Activated CD4-positive, alpha-beta memory T cell treated with anti-CD3 and anti-CD28 coated beads for 36 hours (primary cell): ENCODE measurements at regions of chr6 and their contacts with region 1.

Region 1: DNA sequence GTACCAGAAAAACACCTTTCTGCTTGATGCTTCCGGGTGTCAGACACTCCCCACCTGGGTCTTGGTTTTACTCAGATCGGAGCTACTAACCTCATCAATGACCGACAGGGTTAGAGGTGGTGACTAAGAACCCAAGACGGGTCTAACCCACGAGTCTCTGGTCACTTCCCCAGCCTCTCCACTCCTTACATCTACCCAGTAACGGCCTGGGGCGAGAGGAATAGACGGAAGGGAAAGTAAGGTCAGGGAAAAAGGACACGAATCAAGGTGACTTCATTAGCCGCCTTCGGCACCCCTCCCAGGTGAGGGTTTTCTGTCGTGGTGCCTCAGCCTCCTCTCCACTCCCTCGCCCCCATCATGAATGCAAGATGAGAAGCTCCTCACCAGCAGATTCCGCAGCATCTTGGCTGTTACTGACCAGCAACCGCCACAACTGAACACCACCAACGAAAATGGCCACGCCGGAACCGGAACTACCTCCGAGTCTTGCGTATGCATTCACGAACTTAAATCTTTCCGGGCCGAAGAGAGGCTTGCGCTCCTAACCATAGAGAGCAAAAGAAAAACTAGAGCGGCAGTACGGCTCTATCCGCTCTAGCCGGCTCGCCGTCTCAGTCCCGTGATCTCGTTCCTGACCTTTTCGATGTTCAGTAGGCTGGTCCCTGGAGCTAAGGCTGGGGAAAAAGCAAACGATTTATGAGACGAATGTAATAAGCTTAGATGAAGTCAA is at the start of gene COX7A2:
- DNase-seq: peak; percentile 92
- H3K4me3 Mint-ChIP-seq: peak within 1 kb of the TSS; percentile 100
- H3K27ac Mint-ChIP-seq: peak within 1 kb of the TSS; percentile 100
- H3K4me1 Mint-ChIP-seq: peaks cover 26% of the 10 kb centered on the region
- H3K27me3 Mint-ChIP-seq: peaks cover 9% of the 10 kb centered on the region
- total RNA-seq, gene COX7A2: 564 to 566 TPM

Region 2: DNA sequence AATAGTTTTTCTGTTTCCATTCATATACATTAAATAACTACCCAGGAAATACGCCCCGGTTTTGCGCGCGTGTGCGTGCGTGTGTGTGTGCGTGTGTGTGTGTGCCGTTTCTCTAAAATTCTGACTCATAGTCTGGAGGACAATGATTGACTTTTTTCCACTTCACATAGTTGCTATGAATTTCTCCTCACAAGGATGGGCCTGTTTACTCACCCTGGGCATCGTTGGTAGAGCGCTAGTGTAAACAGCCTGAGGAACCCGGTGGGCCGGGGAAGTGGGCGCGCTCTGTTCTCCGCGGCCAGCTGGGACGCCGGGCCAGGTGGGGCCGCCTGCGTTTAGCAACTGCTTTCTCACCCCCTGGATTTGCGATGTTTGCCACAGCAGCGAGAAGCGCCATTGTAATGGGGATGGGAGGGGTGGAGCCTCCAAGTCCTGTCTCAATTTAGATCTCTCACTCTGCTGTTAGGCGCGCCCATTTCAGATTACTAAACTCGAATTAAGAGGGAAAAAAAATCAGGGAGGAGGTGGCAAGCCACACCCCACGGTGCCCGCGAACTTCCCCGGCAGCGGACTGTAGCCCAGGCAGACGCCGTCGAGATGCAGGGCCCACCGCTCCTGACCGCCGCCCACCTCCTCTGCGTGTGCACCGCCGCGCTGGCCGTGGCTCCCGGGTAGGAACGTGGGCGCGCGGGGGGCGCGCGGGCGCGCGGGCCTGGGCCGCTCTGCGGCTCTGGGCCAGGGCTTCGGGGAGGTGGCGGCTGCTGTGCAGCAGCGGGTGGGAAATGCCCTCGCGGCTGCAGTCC is 1547.7 kb before region 1 on chr6 and contains the start of gene CD109:
- CTCF ChIA-PET with region 1: no interaction called
- POLR2A ChIA-PET with region 1: no interaction called
- intact Hi-C with region 1: loop called (anchors 1 kb)
- DNase-seq: peak; percentile 87
- H3K4me3 Mint-ChIP-seq: peak within 1 kb of the TSS; percentile 80
- H3K27ac Mint-ChIP-seq: peak within 1 kb of the TSS; percentile 90
- H3K4me1 Mint-ChIP-seq: peaks cover 36% of the 10 kb centered on the region
- H3K27me3 Mint-ChIP-seq: peaks cover 16% of the 10 kb centered on the region
- total RNA-seq, gene CD109: 7.2 to 9.1 TPM

Region 3: GRCh38 chr6:75266716-75267291 is 23.3 kb after region 1 on chr6:
- CTCF ChIA-PET with region 1: interaction called, 12 read pairs
- POLR2A ChIA-PET with region 1: no interaction called
- intact Hi-C with region 1: no loop called
- DNase-seq: no peak
- H3K4me3 Mint-ChIP-seq: no peak overlapping the region
- H3K27ac Mint-ChIP-seq: no peak overlapping the region
- H3K4me1 Mint-ChIP-seq: peaks cover 38% of the 10 kb centered on the region
- H3K27me3 Mint-ChIP-seq: no peaks in the 10 kb centered on the region

Region 4: DNA sequence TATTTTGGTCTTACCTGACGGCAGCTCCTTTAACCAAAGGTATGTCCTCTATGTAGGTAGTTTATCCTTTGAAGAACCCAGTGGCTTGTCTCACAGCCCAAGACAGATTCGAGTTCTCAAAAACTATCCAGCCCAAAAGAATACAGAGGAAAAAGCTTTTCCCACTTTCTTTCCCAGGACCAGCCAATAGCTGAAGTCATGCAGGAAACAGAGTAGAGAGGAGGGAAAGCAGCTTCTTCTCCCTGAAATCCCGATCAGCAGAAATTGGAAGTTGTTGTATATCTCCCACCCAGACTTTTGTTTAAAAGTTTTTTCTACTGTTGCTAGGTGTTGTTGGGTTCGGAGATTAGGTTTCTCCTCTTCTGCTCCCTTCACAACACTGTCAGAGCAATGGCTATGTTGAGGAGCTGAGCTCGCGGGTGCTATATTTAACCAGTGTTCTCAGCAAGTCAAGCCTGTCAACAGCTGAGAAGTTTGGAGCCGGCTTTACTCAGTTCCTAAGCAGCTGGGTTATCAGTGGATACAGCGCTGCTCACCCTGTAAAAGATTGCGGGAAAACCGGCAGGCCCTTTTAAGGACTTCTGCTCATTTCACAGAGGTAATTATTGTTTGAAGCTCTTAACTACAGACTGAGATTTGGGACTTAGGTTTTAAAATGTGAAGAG is 250.0 kb after region 1 on chr6 and contains the start of gene FILIP1:
- CTCF ChIA-PET with region 1: no interaction called
- POLR2A ChIA-PET with region 1: interaction called, 3 read pairs
- intact Hi-C with region 1: loop called (anchors 1 kb)
- DNase-seq: no peak
- H3K4me3 Mint-ChIP-seq: no peak within 1 kb of the TSS
- H3K27ac Mint-ChIP-seq: no peak within 1 kb of the TSS
- H3K4me1 Mint-ChIP-seq: peaks cover 11% of the 10 kb centered on the region
- H3K27me3 Mint-ChIP-seq: peaks cover 23% of the 10 kb centered on the region
- total RNA-seq, gene FILIP1: not detected

Region 5: GRCh38 chr6:75601304-75602245 is 358.1 kb after region 1 on chr6 and contains the start of gene SENP6:
- CTCF ChIA-PET with region 1: interaction called, 3 read pairs
- POLR2A ChIA-PET with region 1: interaction called, 3 read pairs
- intact Hi-C with region 1: loop called (anchors 2 kb)
- DNase-seq: peak; percentile 79
- H3K4me3 Mint-ChIP-seq: peak within 1 kb of the TSS; percentile 99
- H3K27ac Mint-ChIP-seq: peak within 1 kb of the TSS; percentile 98
- H3K4me1 Mint-ChIP-seq: peaks cover 60% of the 10 kb centered on the region
- H3K27me3 Mint-ChIP-seq: no peaks in the 10 kb centered on the region
- total RNA-seq, gene SENP6: 57.1 to 59.4 TPM